B cell (primary cell): ENCODE measurements at regions of chr19 and their contacts with region 1.

Region 1: GRCh38 chr19:34269968-34270621 is 15.7 kb downstream of the GARRE1 start:
- DNase-seq: peak; percentile 90
- ATAC-seq: peak; percentile 87
- H3K4me3 ChIP-seq: peak overlapping the region; percentile 21 to 51 (median 38)
- H3K4me3 Mint-ChIP-seq: peak overlapping the region; percentile 60
- H3K27ac ChIP-seq: peak overlapping the region; percentile 86 to 96
- H3K27ac Mint-ChIP-seq: peak overlapping the region; percentile 84
- H3K4me1 ChIP-seq: peaks cover 79 to 83% of the 10 kb centered on the region in 2 donors
- H3K4me1 Mint-ChIP-seq: peaks cover 76% of the 10 kb centered on the region
- H3K27me3 ChIP-seq: no peaks in the 10 kb centered on the region
- H3K27me3 Mint-ChIP-seq: no peaks in the 10 kb centered on the region
- CTCF ChIP-seq: no peak

Region 2: DNA sequence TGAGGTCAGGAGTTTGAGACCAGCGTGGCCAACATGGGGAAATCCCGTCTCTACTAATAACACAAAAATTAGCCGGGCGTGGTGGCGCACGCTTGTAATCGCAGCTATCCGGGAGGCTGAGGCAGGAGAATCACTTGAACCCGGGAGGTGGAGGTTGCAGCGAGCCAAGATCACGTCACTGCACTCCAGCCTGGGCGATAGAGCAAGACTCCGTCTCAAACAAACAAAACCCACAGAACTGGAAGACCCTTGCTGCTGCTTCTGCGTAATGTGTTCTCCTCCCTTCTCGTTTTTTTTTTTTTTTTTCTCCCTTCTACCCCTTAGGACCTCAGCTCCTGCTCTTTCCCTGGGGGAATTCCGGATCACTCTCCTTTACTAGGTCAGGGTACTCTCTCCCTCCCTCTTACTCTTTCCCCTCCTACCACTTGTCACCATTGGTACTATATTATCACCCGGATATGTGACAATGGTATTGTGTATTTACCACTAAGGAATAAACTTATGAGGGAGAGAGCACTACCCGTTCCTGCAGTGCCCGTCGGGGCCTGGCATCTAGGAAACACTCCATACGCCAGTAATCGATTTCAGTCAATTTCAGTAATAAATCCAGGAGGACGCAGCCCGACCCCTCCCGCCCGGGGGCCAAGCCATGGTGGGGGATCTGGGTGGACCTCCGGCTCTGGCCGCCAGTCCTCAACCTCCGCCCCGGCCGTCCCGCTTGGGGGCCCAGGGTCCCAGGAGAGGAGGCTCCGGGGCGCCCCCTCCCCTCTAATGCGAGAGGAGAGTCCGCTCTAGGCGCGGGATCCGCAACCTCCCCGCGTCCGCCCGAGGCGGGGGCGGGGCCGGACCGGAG is 16.2 kb before region 1 on chr19:
- CTCF ChIA-PET with region 1: interaction called, 5 read pairs
- POLR2A ChIA-PET with region 1: interaction called, 5 read pairs
- intact Hi-C with region 1: loop called (anchors 1 kb)
- DNase-seq: peak; percentile 87
- ATAC-seq: peak; percentile 20
- H3K4me3 ChIP-seq: peak overlapping the region; percentile 83 to 93 (median 86)
- H3K4me3 Mint-ChIP-seq: peak overlapping the region; percentile 95
- H3K27ac ChIP-seq: peak overlapping the region; percentile 91 to 92
- H3K27ac Mint-ChIP-seq: peak overlapping the region; percentile 97
- H3K4me1 ChIP-seq: peaks cover 13 to 23% of the 10 kb centered on the region in 2 donors
- H3K4me1 Mint-ChIP-seq: peaks cover 28% of the 10 kb centered on the region
- H3K27me3 ChIP-seq: no peaks in the 10 kb centered on the region
- H3K27me3 Mint-ChIP-seq: no peaks in the 10 kb centered on the region
- CTCF ChIP-seq: no peak

Region 3: DNA sequence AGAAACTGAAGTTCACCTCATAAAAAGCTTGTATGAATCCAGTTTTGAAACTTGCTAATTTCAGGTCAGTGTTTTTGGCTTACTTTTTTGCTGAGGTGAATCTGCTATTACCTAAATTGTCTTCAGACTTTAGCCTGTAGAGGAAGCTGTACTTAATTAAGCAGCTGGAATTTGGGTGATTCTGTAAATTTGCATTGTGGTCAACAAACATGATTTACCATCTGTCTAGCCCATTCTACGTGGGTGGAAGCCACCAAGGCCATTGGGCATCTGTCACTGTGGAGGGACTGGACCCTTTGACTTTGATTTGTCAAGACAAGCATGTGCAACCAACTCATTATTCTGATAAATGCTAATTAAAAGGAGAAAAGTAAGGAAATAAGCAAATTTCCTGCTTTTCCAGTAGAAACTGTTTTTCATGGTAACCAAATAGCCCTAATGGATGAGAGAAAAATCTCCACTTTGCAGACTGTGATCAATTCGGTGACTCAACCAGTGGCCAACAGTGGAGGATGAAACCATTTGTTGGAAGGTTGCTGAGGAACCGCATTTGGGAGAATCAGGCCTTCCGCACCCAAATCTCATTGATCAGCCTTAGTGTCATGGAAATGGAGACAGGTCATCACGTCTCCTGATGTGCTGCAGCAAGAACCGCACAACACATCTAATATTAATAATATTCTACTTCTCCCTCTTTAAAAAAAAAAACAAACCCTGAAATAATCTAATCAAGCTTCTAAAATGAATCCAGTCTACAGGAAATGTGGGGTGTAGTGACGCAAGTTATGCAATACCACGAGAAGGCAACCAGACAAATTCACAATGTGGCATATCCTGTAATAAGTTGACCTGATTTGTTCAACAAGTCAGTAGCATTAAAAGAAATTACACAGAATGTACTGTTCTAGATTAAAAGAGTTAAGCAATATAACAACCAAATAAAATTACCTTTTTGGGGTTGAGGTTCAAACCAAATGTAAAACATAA is 38.6 kb after region 1 on chr19:
- CTCF ChIA-PET with region 1: no interaction called
- POLR2A ChIA-PET with region 1: interaction called, 12 read pairs
- intact Hi-C with region 1: no loop called
- DNase-seq: peak; percentile 41
- ATAC-seq: no peak
- H3K4me3 ChIP-seq: no peak overlapping the region
- H3K4me3 Mint-ChIP-seq: peak overlapping the region; percentile 66
- H3K27ac ChIP-seq: peak overlapping the region; percentile 14 to 82
- H3K27ac Mint-ChIP-seq: peak overlapping the region; percentile 86
- H3K4me1 ChIP-seq: peaks cover 37 to 45% of the 10 kb centered on the region in 2 donors
- H3K4me1 Mint-ChIP-seq: peaks cover 54% of the 10 kb centered on the region
- H3K27me3 ChIP-seq: no peaks in the 10 kb centered on the region
- H3K27me3 Mint-ChIP-seq: no peaks in the 10 kb centered on the region
- CTCF ChIP-seq: no peak

Region 4: DNA sequence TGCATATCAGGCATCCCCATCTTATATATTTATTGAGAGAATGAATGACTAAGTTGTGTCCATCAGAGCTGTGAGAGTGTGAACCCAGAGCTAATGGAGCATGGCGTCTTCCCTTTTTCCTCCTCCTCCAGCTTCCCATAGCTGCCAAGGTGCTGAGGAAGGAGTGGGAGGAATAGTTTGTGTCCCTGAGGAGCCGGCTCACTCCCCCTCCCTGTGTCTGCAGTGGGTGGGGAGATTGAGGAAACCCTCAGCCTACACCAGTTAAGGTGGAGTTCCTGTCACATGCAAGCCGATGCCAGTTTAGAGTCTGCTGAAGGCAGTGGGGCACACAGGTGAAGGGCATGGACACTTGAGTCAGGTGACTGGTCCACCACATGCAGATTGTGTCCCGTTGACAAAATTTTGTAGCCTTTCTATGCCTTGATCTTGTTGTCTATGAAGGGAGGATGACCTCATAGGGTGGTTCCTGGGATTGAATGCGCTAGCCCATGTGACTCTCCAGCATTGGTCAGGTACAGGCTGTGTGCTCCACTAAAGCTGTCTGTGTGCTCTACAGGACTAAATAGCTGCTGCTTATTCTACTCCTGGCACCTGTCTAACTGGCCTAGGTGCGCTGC is 47.3 kb after region 1 on chr19:
- CTCF ChIA-PET with region 1: interaction called, 3 read pairs
- POLR2A ChIA-PET with region 1: interaction called, 4 read pairs
- intact Hi-C with region 1: loop called (anchors 5 kb)
- DNase-seq: peak; percentile 26
- ATAC-seq: peak; percentile 32
- H3K4me3 ChIP-seq: no peak overlapping the region
- H3K4me3 Mint-ChIP-seq: peak overlapping the region; percentile 51
- H3K27ac ChIP-seq: peak overlapping the region; percentile 9 to 44
- H3K27ac Mint-ChIP-seq: peak overlapping the region; percentile 51
- H3K4me1 ChIP-seq: peaks cover 43 to 54% of the 10 kb centered on the region in 2 donors
- H3K4me1 Mint-ChIP-seq: peaks cover 51% of the 10 kb centered on the region
- H3K27me3 ChIP-seq: no peaks in the 10 kb centered on the region
- H3K27me3 Mint-ChIP-seq: no peaks in the 10 kb centered on the region
- CTCF ChIP-seq: no peak

Region 5: GRCh38 chr19:34712395-34713261 is 442.5 kb after region 1 on chr19:
- CTCF ChIA-PET with region 1: no interaction called
- POLR2A ChIA-PET with region 1: no interaction called
- intact Hi-C with region 1: no loop called
- DNase-seq: peak; percentile 83
- ATAC-seq: peak; percentile 56
- H3K4me3 ChIP-seq: no peak overlapping the region
- H3K4me3 Mint-ChIP-seq: no peak overlapping the region
- H3K27ac ChIP-seq: no peak overlapping the region
- H3K27ac Mint-ChIP-seq: no peak overlapping the region
- H3K4me1 ChIP-seq: no peaks in the 10 kb centered on the region
- H3K4me1 Mint-ChIP-seq: no peaks in the 10 kb centered on the region
- H3K27me3 ChIP-seq: peaks cover 0 to 12% (median 2%) of the 10 kb centered on the region in 4 experiments
- H3K27me3 Mint-ChIP-seq: peaks cover 30% of the 10 kb centered on the region
- CTCF ChIP-seq: peak; percentile 80